ENCODE measurements at regions of chr1 and their contacts with region 1.

Region 1: DNA sequence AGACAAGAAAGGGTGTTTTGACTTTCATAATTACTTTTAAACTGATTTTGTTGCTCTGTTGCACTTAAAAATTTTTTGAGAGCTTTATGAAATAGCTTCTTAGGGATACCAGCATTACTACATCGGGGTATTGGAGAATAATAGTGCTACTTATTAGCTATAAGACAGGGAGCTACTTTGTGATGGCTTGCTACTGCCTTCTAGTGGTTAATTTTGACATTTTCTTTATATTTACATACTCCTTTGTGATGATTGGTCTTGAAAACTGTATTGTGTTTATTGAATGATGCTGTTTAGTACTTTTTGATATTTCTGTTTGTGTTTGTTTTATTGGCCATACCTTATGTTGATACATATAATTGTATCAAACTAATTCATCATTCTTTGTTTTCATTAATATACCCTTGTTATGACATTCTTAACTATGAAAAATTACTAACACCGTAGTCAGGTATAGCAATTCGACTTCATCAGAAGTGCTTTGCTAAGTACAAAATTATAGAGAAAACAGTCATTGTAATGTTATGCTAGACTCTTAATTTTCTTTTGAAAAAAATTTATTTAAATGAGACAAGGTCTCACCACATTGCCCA is 85.5 kb downstream of the CLIC4 start:
- DNase-seq: peak; percentile 36
- H3K4me3 ChIP-seq: no peak overlapping the region
- H3K27ac ChIP-seq: no peak overlapping the region
- H3K27me3 ChIP-seq: no peaks in the 10 kb centered on the region
- CTCF ChIP-seq: peak; percentile 84

Region 2: GRCh38 chr1:24659993-24660665 is 170.6 kb before region 1 on chr1:
- CTCF ChIA-PET with region 1: interaction called, 11 read pairs
- POLR2A ChIA-PET with region 1: no interaction called
- DNase-seq: no peak
- H3K4me3 ChIP-seq: no peak overlapping the region
- H3K27ac ChIP-seq: no peak overlapping the region
- H3K27me3 ChIP-seq: no peaks in the 10 kb centered on the region
- CTCF ChIP-seq: no peak

Region 3: GRCh38 chr1:24673336-24673735 is 157.4 kb before region 1 on chr1:
- CTCF ChIA-PET with region 1: interaction called, 28 read pairs
- POLR2A ChIA-PET with region 1: no interaction called
- DNase-seq: no peak
- H3K4me3 ChIP-seq: no peak overlapping the region
- H3K27ac ChIP-seq: no peak overlapping the region
- H3K27me3 ChIP-seq: no peaks in the 10 kb centered on the region
- CTCF ChIP-seq: no peak

Region 4: DNA sequence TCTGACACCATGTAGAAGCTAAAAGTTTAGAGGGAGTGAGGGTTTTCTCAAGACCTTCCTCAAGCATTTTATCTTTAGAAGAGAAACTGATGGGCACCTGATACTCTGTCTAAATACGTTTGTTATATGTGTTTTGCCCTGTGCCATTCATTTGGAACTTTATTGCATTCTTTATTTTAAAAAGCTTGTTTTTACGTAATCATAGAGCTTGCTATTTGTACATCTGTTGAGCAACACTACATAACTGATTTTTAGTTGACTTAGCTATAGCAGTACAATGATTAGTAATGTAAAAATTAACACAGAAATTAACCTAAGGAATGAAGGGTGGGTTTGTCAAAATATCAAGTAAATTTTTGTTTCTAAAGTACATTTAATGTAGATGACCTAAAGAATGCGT is 10.8 kb after region 1 on chr1:
- CTCF ChIA-PET with region 1: interaction called, 10 read pairs
- POLR2A ChIA-PET with region 1: no interaction called
- DNase-seq: no peak
- H3K4me3 ChIP-seq: no peak overlapping the region
- H3K27ac ChIP-seq: no peak overlapping the region
- H3K27me3 ChIP-seq: no peaks in the 10 kb centered on the region
- CTCF ChIP-seq: no peak

Region 5: GRCh38 chr1:24861821-24862727 is 31.3 kb after region 1 on chr1:
- CTCF ChIA-PET with region 1: no interaction called
- POLR2A ChIA-PET with region 1: no interaction called
- DNase-seq: no peak
- H3K4me3 ChIP-seq: no peak overlapping the region
- H3K27ac ChIP-seq: no peak overlapping the region
- H3K27me3 ChIP-seq: peaks cover 23% of the 10 kb centered on the region
- CTCF ChIP-seq: peak; percentile 34